AG04450 (cell line): ENCODE measurements at regions of chr3 and their contacts with region 1.

Region 1: DNA sequence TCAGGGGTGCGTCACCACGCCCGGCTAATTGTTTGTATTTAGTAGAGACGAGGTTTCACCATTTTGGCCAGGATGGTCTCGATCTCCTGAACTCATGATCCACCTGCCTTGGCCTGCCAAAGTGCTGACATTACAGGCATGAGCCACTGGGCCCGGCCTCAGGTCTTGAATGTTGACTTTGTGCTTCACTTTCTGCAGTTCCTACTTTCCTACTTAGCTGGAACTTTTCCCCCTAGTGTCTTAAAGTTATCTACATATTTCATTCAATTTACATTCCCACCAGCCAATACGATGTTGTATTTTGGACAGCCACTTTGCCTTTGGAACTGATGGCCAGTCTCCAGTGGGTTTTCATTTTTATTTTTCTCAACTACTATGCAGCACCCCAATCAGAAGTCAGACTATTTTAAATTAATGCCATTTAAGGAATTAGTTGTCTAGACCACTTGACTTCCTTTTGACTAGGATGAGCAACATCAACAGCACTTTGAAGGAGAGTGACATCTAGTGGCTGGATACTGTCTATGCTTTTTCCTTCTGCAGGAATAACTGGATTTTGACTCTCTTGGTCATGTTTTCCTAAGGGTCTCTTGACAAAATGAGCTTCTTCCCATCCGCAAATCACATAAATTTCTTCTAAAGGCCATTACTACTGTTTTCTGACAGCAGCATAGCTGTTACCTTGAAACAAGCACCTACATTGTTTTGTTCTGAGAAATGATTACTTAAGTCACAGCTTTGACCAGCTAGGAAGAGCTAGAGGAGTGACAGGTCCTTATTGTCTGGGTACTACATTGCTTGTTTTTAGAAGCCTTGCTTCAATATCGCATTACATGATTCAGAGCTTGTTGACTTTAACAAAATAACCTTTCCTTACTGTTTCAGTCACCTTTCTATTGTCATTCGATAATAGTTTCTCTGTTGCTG is 140.2 kb downstream of the ITPR1 start:
- DNase-seq: peak; percentile 20
- H3K4me3 ChIP-seq: no peak overlapping the region
- H3K27ac ChIP-seq: no peak overlapping the region
- H3K27me3 ChIP-seq: peaks cover 2% of the 10 kb centered on the region
- CTCF ChIP-seq: peak; percentile 93

Region 2: GRCh38 chr3:4284865-4285264 is 348.5 kb before region 1 on chr3:
- CTCF ChIA-PET with region 1: interaction called, 13 read pairs
- POLR2A ChIA-PET with region 1: no interaction called
- DNase-seq: no peak
- H3K4me3 ChIP-seq: no peak overlapping the region
- H3K27ac ChIP-seq: no peak overlapping the region
- H3K27me3 ChIP-seq: no peaks in the 10 kb centered on the region
- CTCF ChIP-seq: no peak

Region 3: GRCh38 chr3:4314688-4315087 is 318.7 kb before region 1 on chr3:
- CTCF ChIA-PET with region 1: interaction called, 16 read pairs
- POLR2A ChIA-PET with region 1: no interaction called
- DNase-seq: no peak
- H3K4me3 ChIP-seq: no peak overlapping the region
- H3K27ac ChIP-seq: no peak overlapping the region
- H3K27me3 ChIP-seq: no peaks in the 10 kb centered on the region
- CTCF ChIP-seq: peak; percentile 51

Region 4: DNA sequence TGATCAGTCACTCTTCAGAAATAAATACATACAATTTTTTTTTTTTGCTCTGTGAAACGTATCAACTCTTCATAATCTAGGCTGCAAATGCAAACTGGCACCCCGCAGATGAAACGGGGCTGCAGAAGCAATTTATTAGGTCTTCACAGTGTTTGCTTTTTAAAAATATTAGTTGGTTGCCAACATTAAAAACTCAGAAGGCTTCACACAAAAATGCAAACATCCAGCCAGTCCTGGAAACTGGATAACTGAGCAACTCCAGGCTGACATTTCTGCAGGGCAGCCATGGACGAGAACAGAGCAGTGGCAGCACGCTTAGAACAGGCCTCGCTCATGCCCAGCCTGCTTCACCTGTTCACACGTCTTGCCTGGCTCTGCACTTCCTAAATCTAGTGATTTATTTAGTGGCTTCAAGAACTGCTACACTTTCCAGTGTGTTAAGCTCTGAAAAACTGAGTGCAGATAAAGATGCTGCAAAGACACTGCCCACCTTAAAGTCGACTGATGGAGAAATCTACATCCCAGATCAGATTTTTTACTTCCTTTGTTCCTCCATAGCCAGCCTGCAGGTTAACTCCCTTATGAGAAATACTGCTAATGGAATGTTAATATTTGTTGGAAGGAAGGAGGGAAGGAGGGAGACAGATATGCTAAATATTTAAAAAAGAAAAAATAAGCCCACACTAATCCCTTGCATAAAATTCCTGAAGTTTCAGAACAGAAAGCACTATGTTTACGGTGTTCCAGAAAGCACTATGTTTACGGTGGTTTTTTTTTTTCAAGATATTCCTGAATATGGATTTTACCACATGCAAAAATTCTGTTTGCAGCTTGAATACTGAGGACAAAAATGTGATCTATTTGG is 276.6 kb before region 1 on chr3:
- CTCF ChIA-PET with region 1: interaction called, 336 read pairs
- POLR2A ChIA-PET with region 1: no interaction called
- DNase-seq: no peak
- H3K4me3 ChIP-seq: no peak overlapping the region
- H3K27ac ChIP-seq: no peak overlapping the region
- H3K27me3 ChIP-seq: no peaks in the 10 kb centered on the region
- CTCF ChIP-seq: no peak

Region 5: GRCh38 chr3:4493014-4493940 is 140.1 kb before region 1 on chr3 and contains the start of gene ITPR1:
- CTCF ChIA-PET with region 1: interaction called, 43 read pairs
- POLR2A ChIA-PET with region 1: interaction called, 9 read pairs
- DNase-seq: peak; percentile 99
- H3K4me3 ChIP-seq: peak within 1 kb of the TSS; percentile 83
- H3K27ac ChIP-seq: peak within 1 kb of the TSS; percentile 11
- H3K27me3 ChIP-seq: peaks cover 9% of the 10 kb centered on the region
- CTCF ChIP-seq: no peak
- polyA plus RNA-seq, gene ITPR1: 6.7 and 7.4 TPM in 2 replicates

Region 6: GRCh38 chr3:4584456-4585249 is 48.7 kb before region 1 on chr3:
- CTCF ChIA-PET with region 1: interaction called, 10 read pairs
- POLR2A ChIA-PET with region 1: no interaction called
- DNase-seq: no peak
- H3K4me3 ChIP-seq: peak overlapping the region; percentile 42
- H3K27ac ChIP-seq: peak overlapping the region; percentile 31
- H3K27me3 ChIP-seq: no peaks in the 10 kb centered on the region
- CTCF ChIP-seq: peak; percentile 18; the same call in 1 of the 2 replicates

Region 7: DNA sequence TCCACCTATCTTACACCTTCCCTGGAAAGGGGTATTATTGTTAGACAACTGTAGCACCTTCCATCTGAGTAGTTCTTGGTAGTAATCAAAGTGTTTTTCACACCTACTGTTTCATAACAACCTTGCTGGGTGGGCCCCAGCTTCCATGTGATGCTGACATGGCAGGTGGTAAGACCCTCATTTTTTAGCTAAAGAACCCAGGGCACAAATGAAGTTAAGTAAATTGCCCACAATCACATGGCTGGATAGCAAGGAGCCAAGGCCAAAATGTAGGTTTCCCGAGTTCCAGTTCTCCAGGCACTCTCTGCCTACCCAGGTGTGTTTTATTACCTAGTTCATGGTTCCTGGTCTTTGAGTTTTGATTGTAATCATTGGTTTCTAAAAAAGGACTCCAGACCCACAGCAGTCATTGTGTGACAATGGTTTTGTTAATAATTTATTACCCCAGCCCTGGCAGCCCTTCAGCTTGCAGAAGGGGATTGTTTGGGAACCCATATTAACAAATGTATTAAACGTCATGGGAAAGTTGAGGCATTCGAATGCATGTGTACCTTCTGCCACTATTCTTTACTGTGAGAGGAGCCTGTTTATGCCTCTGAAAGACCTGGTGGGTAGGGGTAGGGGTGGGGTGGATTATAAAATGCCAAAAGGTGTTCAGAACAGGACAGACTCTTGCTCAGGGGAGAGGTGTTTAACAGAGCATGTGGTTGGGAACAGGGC is 123.7 kb after region 1 on chr3:
- CTCF ChIA-PET with region 1: no interaction called
- POLR2A ChIA-PET with region 1: no interaction called
- DNase-seq: no peak
- H3K4me3 ChIP-seq: no peak overlapping the region
- H3K27ac ChIP-seq: no peak overlapping the region
- H3K27me3 ChIP-seq: peaks cover 19% of the 10 kb centered on the region
- CTCF ChIP-seq: no peak

Region 8: GRCh38 chr3:4907643-4908432 is 274.5 kb after region 1 on chr3:
- CTCF ChIA-PET with region 1: no interaction called
- POLR2A ChIA-PET with region 1: no interaction called
- DNase-seq: no peak
- H3K4me3 ChIP-seq: no peak overlapping the region
- H3K27ac ChIP-seq: no peak overlapping the region
- H3K27me3 ChIP-seq: no peaks in the 10 kb centered on the region
- CTCF ChIP-seq: no peak